PC-9 (cell line): ENCODE measurements at regions of chr1 and their contacts with region 1.

Region 1: DNA sequence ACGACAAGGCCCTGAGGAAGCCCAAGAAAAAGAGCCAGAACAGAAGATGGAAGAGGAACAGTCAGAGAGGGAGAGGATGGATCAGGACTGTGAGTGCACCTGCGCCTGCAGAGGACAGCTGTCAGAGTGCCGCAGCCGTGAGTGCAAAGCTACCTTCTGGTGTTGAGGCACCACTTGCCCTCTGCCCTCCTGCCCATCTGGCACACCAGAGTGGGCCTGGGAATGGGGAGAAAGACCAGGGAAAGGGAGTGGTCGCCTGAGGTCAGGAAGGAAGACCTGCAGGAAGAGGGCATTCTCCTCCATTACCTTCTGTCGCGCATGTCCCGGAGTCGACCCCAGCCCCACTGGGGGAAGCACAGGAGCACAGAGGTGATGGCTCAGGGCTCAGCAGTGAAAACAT is 26.2 kb downstream of the VASH2 start:
- DNase-seq: no peak
- H3K4me3 ChIP-seq: no peak overlapping the region
- H3K27ac ChIP-seq: no peak overlapping the region
- H3K4me1 ChIP-seq: no peaks in the 10 kb centered on the region
- H3K27me3 ChIP-seq: peaks cover 13% of the 10 kb centered on the region; the same call in 1 of the 2 replicates
- CTCF ChIP-seq: no peak

Region 2: GRCh38 chr1:212938846-212939245 is 37.7 kb before region 1 on chr1:
- CTCF ChIA-PET with region 1: no interaction called
- POLR2A ChIA-PET with region 1: no interaction called
- intact Hi-C with region 1: no loop called
- DNase-seq: no peak
- H3K4me3 ChIP-seq: no peak overlapping the region
- H3K27ac ChIP-seq: no peak overlapping the region
- H3K4me1 ChIP-seq: no peaks in the 10 kb centered on the region
- H3K27me3 ChIP-seq: no peaks in the 10 kb centered on the region
- CTCF ChIP-seq: no peak

Region 3: DNA sequence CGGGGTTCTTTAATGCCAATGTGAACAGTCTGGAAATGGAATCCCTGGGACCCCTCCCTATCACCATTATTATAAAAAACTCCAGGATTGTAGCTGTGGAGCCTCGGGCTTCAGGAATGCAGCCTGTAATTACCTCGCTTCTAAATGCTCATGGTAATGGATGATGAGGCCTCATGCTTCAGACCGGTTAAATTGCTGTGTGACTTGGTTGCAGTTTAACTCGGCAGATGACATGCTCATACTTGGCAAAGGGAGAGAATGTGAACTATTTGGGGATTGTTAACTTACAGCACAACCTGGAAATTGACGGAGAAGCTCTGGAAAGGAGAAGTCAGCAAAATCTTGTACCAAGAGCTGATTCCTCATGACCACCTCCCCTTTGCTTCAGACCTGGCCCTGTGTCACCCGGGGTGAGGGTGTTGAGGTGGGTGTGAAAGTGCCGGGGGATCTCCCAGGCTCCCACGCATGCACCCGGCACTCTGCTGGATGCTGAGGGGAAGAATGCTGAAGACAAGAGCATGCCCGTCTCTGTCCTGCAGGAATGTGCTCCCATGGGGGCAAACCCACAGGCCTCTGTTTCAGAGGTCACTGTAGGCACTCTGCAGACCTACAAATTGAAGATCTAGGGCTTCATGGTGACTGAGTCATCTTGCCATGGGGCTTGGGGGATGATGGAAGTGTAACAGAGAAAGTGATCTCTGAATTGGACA is 439.2 kb after region 1 on chr1:
- CTCF ChIA-PET with region 1: interaction called, 31 read pairs
- POLR2A ChIA-PET with region 1: no interaction called
- intact Hi-C with region 1: no loop called
- DNase-seq: no peak
- H3K4me3 ChIP-seq: no peak overlapping the region
- H3K27ac ChIP-seq: no peak overlapping the region
- H3K4me1 ChIP-seq: no peaks in the 10 kb centered on the region
- H3K27me3 ChIP-seq: no peaks in the 10 kb centered on the region; the same call in 1 of the 2 replicates
- CTCF ChIP-seq: no peak